PC-3 (cell line): ENCODE measurements at regions of chr4 and their contacts with region 1.

Region 1: DNA sequence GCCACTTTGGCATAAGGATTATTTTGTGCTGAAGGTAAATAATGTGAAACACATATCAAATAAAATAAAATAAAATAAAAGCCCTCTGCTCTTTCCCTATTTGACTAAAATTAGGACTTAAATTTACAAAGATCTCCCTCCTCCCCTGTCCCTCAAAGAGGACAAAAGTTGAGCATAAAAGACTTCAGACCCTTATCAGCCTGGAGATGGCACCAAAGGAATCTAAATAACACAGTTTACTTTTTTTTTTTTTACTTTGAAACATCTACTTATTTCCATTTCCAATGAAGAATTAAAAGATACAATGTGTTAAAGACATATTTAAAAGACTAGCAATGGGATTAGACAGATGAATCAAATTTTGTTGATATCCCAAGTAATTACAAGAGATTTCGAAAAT is 89.7 kb downstream of the EPHA5 start:
- DNase-seq: peak; percentile 31
- ATAC-seq: no peak
- H3K4me3 ChIP-seq: no peak overlapping the region
- H3K27ac ChIP-seq: no peak overlapping the region
- H3K4me1 ChIP-seq: no peaks in the 10 kb centered on the region
- H3K27me3 ChIP-seq: no peaks in the 10 kb centered on the region
- CTCF ChIP-seq: peak; percentile 54

Region 2: GRCh38 chr4:65535113-65535512 is 45.4 kb before region 1 on chr4:
- CTCF ChIA-PET with region 1: no interaction called
- POLR2A ChIA-PET with region 1: interaction called, 19 read pairs
- intact Hi-C with region 1: no loop called
- DNase-seq: no peak
- ATAC-seq: no peak
- H3K4me3 ChIP-seq: no peak overlapping the region
- H3K27ac ChIP-seq: no peak overlapping the region
- H3K4me1 ChIP-seq: peaks cover 6% of the 10 kb centered on the region; the same call in 1 of the 2 replicates
- H3K27me3 ChIP-seq: no peaks in the 10 kb centered on the region
- CTCF ChIP-seq: no peak

Region 3: GRCh38 chr4:65865489-65865888 is 284.9 kb after region 1 on chr4:
- CTCF ChIA-PET with region 1: no interaction called
- POLR2A ChIA-PET with region 1: no interaction called
- intact Hi-C with region 1: loop called (anchors 5 kb)
- DNase-seq: peak; percentile 77
- ATAC-seq: no peak
- H3K4me3 ChIP-seq: no peak overlapping the region
- H3K27ac ChIP-seq: no peak overlapping the region
- H3K4me1 ChIP-seq: peaks cover 17% of the 10 kb centered on the region
- H3K27me3 ChIP-seq: no peaks in the 10 kb centered on the region
- CTCF ChIP-seq: peak; percentile 89

Region 4: DNA sequence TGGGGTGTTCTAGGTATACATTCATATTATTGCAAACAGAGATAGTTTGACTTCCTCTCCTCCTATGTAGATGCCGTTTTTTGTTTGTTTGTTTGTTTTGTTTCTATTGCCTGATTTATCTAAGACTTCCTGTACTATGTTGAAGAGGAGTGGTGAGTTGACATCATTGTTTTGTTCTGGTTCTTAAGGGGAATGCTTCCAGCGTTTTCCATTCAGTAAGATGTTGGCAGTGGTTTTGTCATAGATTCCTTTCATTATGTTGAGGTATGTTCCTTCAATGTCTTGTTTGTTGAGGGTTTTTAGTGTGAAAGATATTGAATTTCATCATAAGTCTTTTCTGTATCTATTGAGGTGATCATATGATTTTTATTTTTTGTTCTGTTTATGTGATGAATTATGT is 491.4 kb after region 1 on chr4:
- CTCF ChIA-PET with region 1: no interaction called
- POLR2A ChIA-PET with region 1: interaction called, 15 read pairs
- intact Hi-C with region 1: no loop called
- DNase-seq: no peak
- ATAC-seq: no peak
- H3K4me3 ChIP-seq: no peak overlapping the region
- H3K27ac ChIP-seq: no peak overlapping the region
- H3K4me1 ChIP-seq: no peaks in the 10 kb centered on the region; the same call in 1 of the 2 replicates
- H3K27me3 ChIP-seq: no peaks in the 10 kb centered on the region
- CTCF ChIP-seq: no peak

Region 5: GRCh38 chr4:66169341-66169740 is 588.8 kb after region 1 on chr4:
- CTCF ChIA-PET with region 1: interaction called, 3 read pairs
- POLR2A ChIA-PET with region 1: no interaction called
- intact Hi-C with region 1: loop called (anchors 1 kb)
- DNase-seq: peak; percentile 74
- ATAC-seq: peak; percentile 71
- H3K4me3 ChIP-seq: no peak overlapping the region
- H3K27ac ChIP-seq: no peak overlapping the region
- H3K4me1 ChIP-seq: no peaks in the 10 kb centered on the region
- H3K27me3 ChIP-seq: no peaks in the 10 kb centered on the region
- CTCF ChIP-seq: peak; percentile 88